ENCODE measurements at regions of chr1 and their contacts with region 1.

Region 1: DNA sequence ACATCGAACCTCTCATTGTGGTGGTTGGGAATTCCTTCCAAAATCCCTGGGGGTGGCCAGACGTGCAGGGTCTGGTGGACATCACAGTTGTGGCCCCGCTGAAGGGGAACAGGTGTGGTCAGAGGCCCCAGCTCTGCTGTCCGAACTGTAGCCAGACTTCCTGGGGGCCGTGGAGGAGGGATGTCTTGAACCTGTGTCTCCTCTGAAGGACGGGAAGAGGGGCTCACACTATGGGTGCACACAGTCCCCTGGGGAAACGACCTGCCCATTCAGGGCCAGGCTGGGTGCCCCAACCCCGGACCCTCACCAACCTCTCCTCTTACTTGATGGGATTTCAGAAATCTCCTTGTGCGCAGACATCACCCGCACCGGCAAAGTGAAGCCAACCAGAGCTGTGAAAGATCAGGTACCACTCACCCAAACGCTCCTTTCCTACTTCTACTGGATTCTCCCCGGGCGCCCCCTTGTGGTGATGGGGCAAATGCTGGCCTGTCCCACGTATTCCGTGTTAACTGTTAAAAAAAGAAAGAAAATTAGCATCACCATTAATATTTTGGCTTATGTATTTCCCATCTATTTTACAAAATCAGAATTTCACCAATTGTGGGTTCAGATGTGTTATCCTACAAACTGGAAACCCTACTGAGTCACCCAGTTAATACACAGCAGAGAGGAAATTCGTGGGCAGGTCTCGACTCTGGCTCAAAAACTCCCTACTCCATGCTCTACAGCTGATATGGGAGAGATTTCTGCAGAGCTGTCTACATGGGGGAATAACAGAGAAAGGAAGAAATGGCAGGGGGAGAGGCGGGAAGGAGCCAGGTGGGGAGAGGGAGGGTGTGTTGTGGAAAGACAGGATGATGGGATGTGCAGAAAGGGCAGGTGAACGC is 28.1 kb downstream of the PADI4 start:
- DNase-seq: peak; percentile 78
- H3K4me3 ChIP-seq: no peak overlapping the region
- H3K27ac ChIP-seq: no peak overlapping the region
- H3K4me1 ChIP-seq: no peaks in the 10 kb centered on the region
- H3K27me3 ChIP-seq: peaks cover 9% of the 10 kb centered on the region; the same call in 1 of the 2 replicates

Region 2: DNA sequence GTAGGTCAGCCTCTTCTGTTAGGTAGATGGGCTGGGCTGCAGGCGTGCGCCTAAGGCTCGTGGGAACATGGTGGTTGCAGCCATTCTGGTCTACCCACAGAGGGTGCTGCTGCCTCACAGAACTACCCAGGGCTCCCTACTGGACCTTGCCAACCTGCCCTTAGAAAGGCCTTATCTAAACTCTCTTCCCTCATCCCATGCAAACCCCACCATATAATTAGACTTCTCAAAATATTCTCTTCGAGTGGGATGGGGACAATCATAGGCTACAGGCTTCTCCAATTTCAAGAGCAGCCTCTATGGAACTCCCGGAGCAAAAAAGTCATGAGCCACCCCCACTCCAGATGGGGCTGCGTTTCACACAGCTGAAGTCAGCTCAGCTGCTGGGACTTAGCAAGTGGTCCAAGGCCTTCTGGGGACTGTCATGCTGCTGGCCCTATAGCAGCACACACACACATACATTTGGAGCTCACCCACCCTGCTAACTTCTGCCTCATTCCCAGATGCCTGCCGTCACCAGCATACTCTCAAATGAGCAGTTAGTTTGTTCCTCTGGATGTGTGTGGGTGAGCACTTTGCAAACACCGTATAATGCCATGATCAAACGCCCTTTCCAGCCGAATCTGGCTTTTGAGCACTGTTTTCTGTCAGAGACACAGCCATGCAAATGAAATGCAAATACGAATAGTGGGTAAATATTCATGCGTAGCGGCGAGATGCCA is 276.2 kb before region 1 on chr1:
- in situ Hi-C with region 1: loop called (anchors 10 kb)
- DNase-seq: peak; percentile 86
- H3K4me3 ChIP-seq: no peak overlapping the region
- H3K27ac ChIP-seq: no peak overlapping the region
- H3K4me1 ChIP-seq: peaks cover 7% of the 10 kb centered on the region
- H3K27me3 ChIP-seq: no peaks in the 10 kb centered on the region; the same call in 1 of the 2 replicates

Region 3: GRCh38 chr1:17119076-17119772 is 216.8 kb before region 1 on chr1 and contains the start of gene PADI2:
- in situ Hi-C with region 1: loop called (anchors 10 kb)
- DNase-seq: peak; percentile 75
- H3K4me3 ChIP-seq: peak within 1 kb of the TSS; percentile 52
- H3K27ac ChIP-seq: no peak within 1 kb of the TSS
- H3K4me1 ChIP-seq: 0 out of 2 replicates have a peak, but pooled peaks cover 3% of the 10 kb centered on the region
- H3K27me3 ChIP-seq: peaks cover 29% of the 10 kb centered on the region
- total RNA-seq, gene PADI2: 0.13 and 0.22 TPM in 2 replicates

Region 4: DNA sequence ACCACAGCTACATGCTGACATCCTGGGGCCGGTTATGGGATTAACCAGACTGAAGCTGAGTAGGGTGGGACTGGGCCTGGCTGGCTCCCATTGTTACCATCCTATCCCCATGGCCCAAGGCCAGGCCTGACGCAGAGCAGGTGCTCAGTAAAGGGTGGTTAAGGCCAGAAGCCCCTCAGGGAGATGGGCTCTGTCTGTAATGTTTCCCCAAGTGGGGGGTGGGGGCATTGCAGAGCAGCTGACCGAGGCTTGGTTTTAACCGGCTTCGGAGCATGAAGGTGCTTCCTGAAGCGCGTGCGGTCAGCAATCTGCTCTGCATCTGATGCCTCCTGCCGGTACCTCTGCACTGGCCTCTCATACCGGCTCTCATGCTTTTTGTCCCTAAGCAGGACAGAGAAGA is 335.7 kb after region 1 on chr1:
- in situ Hi-C with region 1: no loop called
- DNase-seq: no peak
- H3K4me3 ChIP-seq: no peak overlapping the region
- H3K27ac ChIP-seq: no peak overlapping the region
- H3K4me1 ChIP-seq: no peaks in the 10 kb centered on the region
- H3K27me3 ChIP-seq: no peaks in the 10 kb centered on the region

Region 5: GRCh38 chr1:17719874-17720273 is 383.8 kb after region 1 on chr1:
- in situ Hi-C with region 1: no loop called
- DNase-seq: peak; percentile 45
- H3K4me3 ChIP-seq: no peak overlapping the region
- H3K27ac ChIP-seq: no peak overlapping the region
- H3K4me1 ChIP-seq: no peaks in the 10 kb centered on the region
- H3K27me3 ChIP-seq: no peaks in the 10 kb centered on the region